HepG2 (cell line): ENCODE measurements at regions of chr5 and their contacts with region 1.

Region 1: DNA sequence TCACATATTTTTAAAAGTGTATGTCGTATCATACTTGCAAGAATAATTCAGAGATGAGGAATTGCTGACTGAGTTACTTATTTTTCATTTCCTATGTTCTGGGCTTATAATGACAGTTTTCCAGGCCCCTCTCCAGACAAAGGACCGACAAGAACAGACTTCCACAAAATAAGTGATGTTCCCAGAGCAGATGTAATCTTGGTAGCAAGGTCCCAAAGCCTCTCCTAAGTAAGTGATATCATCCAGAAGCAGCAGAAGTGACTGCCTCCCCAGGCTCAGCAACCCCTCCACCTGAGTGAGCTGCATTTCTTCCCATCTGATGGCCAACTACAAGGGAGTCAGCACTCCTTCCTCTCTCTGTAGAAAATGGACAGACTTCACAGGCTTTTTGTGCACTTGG is 57.1 kb downstream of the SEMA6A start:
- DNase-seq: no peak
- ATAC-seq: no peak
- H3K4me3 ChIP-seq: no peak overlapping the region
- H3K27ac ChIP-seq: no peak overlapping the region
- H3K4me1 ChIP-seq: peaks cover 12% of the 10 kb centered on the region
- H3K27me3 ChIP-seq: no peaks in the 10 kb centered on the region
- CTCF ChIP-seq: no peak
- EP300 ChIP-seq: no peak
- POLR2A ChIP-seq: no peak
- RAD21 ChIP-seq: no peak

Region 2: GRCh38 chr5:115907177-115907576 is 610.3 kb before region 1 on chr5:
- CTCF ChIA-PET with region 1: no interaction called
- POLR2A ChIA-PET with region 1: no interaction called
- in situ Hi-C with region 1: no loop called
- intact Hi-C with region 1: no loop called
- DNase-seq: no peak
- ATAC-seq: no peak
- H3K4me3 ChIP-seq: no peak overlapping the region
- H3K27ac ChIP-seq: no peak overlapping the region
- H3K4me1 ChIP-seq: no peaks in the 10 kb centered on the region
- H3K27me3 ChIP-seq: no peaks in the 10 kb centered on the region
- CTCF ChIP-seq: no peak
- EP300 ChIP-seq: no peak
- POLR2A ChIP-seq: no peak
- RAD21 ChIP-seq: no peak

Region 3: DNA sequence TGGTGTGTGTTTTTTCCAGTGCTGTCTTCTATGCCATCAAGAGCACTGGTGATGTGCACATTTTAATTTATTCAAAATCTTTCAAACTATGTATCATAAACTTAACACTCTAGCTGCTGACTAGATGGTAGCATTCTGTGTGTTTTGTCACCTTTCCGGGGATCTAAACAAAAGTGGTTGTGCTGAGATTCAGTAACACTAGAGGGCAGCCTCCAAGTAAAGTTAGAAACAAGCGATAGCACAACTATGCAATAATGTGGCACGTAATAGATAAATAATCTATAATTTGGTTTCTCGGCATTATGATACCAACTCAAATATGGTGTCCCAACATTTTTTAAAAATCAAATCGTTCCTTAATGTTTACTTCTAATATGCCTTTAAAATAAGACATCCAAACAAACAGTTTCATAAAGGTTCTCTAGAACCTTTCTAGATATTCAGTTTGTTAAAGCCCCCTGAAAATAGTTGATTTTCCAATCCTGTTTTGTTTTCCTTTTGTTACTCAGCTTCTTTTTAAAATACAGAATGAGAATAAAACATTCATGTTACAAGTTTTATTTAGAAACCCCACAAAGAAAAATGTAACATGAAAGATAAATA is 40.3 kb after region 1 on chr5:
- CTCF ChIA-PET with region 1: no interaction called
- POLR2A ChIA-PET with region 1: no interaction called
- in situ Hi-C with region 1: no loop called
- intact Hi-C with region 1: loop called (anchors 1 kb)
- DNase-seq: peak; percentile 39
- ATAC-seq: peak; percentile 60; the same call in 2 of the 3 replicates
- H3K4me3 ChIP-seq: no peak overlapping the region
- H3K27ac ChIP-seq: no peak overlapping the region
- H3K4me1 ChIP-seq: peaks cover 22% of the 10 kb centered on the region
- H3K27me3 ChIP-seq: no peaks in the 10 kb centered on the region
- CTCF ChIP-seq: peak; percentile 67
- EP300 ChIP-seq: no peak
- POLR2A ChIP-seq: no peak
- RAD21 ChIP-seq: peak; percentile 67

Region 4: DNA sequence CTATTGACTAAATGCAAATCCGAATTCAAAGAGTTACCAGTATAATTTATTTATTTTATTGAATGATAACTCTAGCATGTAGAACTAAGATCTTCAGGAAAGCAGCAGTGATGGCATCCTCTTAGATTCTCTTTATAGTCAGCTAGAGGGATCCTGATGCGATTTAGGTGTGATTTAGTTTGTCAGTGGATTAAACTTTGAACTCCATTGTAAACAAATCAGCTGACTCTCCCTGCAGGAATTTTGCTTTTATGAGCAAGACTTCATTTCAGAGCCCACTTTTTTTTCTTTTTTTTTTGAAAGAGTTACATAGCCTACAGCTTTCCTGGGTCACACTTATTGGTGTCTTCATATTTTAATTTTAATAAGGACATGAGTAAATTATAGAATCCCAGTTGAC is 150.9 kb after region 1 on chr5:
- CTCF ChIA-PET with region 1: no interaction called
- POLR2A ChIA-PET with region 1: no interaction called
- in situ Hi-C with region 1: no loop called
- intact Hi-C with region 1: no loop called
- DNase-seq: peak; percentile 25
- ATAC-seq: no peak
- H3K4me3 ChIP-seq: no peak overlapping the region
- H3K27ac ChIP-seq: no peak overlapping the region
- H3K4me1 ChIP-seq: peaks cover 32% of the 10 kb centered on the region
- H3K27me3 ChIP-seq: no peaks in the 10 kb centered on the region
- CTCF ChIP-seq: no peak
- EP300 ChIP-seq: no peak
- POLR2A ChIP-seq: no peak
- RAD21 ChIP-seq: no peak